ENCODE measurements at regions of chr14 and their contacts with region 1.

Region 1: DNA sequence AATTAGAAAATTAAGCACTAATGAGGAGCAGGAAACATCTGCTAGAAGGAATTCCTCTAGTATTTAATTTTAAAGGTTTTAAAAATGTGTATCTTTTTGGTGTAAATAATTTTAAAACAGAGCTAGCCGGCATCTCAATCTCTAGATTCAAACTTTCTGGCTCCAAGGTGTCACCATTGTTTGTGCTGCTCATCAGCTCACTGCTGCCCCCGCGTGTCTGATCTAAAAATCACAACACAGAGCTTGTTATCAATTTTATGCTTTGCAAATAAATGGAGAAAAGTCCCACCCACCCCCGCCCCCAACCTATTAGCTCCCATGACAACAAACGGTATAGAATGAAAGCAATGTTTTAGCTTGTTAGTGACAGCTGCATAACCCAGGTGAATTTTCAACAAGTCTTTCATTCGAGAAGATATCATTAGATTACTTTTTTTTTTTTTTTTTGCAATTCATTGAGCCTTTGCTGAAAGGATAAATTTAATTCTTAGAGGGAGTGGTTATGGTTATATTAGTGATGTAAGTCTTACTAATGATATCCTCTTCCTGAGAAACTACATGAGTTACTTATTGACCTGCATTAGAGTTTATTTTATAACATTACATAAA is 11.3 kb upstream of the ABHD12B start:
- DNase-seq: peak; percentile 93
- H3K4me3 Mint-ChIP-seq: peak overlapping the region; percentile 81
- H3K27ac Mint-ChIP-seq: peak overlapping the region; percentile 89
- H3K4me1 Mint-ChIP-seq: peaks cover 22% of the 10 kb centered on the region
- H3K27me3 Mint-ChIP-seq: peaks cover 38% of the 10 kb centered on the region

Region 2: GRCh38 chr14:50619556-50620141 is 240.9 kb before region 1 on chr14:
- CTCF ChIA-PET with region 1: interaction called, 19 read pairs
- DNase-seq: no peak
- H3K4me3 Mint-ChIP-seq: no peak overlapping the region
- H3K27ac Mint-ChIP-seq: no peak overlapping the region
- H3K4me1 Mint-ChIP-seq: no peaks in the 10 kb centered on the region
- H3K27me3 Mint-ChIP-seq: no peaks in the 10 kb centered on the region

Region 3: GRCh38 chr14:50773632-50774541 is 86.7 kb before region 1 on chr14:
- CTCF ChIA-PET with region 1: interaction called, 149 read pairs
- DNase-seq: peak; percentile 48
- H3K4me3 Mint-ChIP-seq: no peak overlapping the region
- H3K27ac Mint-ChIP-seq: no peak overlapping the region
- H3K4me1 Mint-ChIP-seq: peaks cover 22% of the 10 kb centered on the region
- H3K27me3 Mint-ChIP-seq: no peaks in the 10 kb centered on the region

Region 4: DNA sequence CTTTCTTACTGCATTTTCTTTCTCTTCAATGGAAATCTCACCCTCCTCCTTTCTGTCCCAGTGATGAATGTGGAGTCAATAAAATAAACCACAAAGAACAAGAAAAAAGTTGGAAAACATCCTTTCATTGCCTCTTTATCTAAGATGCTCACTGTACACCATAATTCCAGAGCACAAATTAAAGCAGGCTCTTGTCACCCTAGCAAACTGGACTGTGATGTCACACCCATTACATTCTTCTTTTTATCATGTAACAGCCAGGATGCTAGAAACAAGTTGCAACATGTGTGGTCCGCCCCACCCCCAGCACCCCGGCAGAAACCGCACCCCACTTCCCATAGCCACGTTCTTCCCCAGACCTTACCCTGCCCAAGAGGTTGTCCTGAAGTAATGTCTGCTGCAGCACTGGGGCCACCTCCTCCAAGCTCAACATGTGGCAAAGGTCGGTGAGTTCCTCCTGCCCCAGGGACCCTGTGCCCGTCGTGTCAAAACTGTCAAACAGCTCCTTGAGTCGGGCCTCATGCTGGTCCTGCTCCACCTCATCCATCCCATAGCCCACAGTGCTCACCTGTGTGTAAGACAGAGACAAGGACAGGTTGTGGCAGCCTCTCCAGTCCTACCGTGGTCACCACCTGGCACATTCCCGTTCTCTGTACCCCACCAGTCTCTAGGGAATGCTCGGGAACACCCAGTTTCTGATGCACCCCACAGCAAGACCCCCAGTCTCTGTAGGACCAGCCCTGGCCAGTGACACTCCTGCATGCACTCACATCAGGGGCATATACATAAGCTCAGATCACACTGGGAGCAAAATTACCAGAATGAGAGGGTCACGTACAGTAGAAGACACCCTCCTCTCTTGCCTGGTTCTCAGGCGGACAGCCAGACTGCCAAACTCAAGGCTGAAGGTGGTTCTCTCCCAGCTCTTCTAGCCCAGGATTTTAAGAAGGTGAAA is 38.8 kb before region 1 on chr14:
- CTCF ChIA-PET with region 1: interaction called, 12 read pairs
- DNase-seq: peak; percentile 82
- H3K4me3 Mint-ChIP-seq: peak overlapping the region; percentile 65
- H3K27ac Mint-ChIP-seq: peak overlapping the region; percentile 86
- H3K4me1 Mint-ChIP-seq: peaks cover 79% of the 10 kb centered on the region
- H3K27me3 Mint-ChIP-seq: no peaks in the 10 kb centered on the region

Region 5: DNA sequence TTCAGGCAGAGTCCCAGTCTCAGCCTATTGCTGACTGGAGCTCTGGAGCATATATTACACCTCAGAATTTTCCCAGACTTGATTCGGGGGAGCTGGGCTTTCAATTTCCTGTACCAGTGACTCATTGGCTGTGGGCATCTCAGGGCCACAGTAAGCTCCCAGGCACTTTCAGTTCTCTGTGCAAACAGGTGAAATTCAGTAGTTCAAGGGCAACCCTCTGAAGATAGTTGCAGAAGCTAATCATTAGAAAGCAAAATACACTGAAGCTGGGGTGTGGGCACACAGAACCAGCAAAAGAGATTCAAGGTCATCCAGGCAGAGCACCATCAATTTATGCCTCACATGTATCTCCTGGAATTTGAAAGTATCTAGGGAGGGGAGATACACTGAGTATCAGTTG is 21.5 kb before region 1 on chr14:
- CTCF ChIA-PET with region 1: interaction called, 20 read pairs
- DNase-seq: no peak
- H3K4me3 Mint-ChIP-seq: no peak overlapping the region
- H3K27ac Mint-ChIP-seq: no peak overlapping the region
- H3K4me1 Mint-ChIP-seq: peaks cover 28% of the 10 kb centered on the region
- H3K27me3 Mint-ChIP-seq: peaks cover 7% of the 10 kb centered on the region

Region 6: GRCh38 chr14:51651388-51652167 is 791.0 kb after region 1 on chr14 and contains the start of gene FRMD6:
- CTCF ChIA-PET with region 1: no interaction called
- DNase-seq: peak; percentile 90
- H3K4me3 Mint-ChIP-seq: peak within 1 kb of the TSS; percentile 81
- H3K27ac Mint-ChIP-seq: peak within 1 kb of the TSS; percentile 82
- H3K4me1 Mint-ChIP-seq: peaks cover 30% of the 10 kb centered on the region
- H3K27me3 Mint-ChIP-seq: peaks cover 30% of the 10 kb centered on the region